ENCODE measurements at regions of chr11 and their contacts with region 1.

Region 1: GRCh38 chr11:121451986-121452608 is at the start of gene SORL1:
- DNase-seq: peak; percentile 66 to 76
- ATAC-seq: peak; percentile 87 to 94 (median 90)
- H3K4me3 ChIP-seq: peak within 1 kb of the TSS; percentile 50 to 89 (median 75)
- H3K27ac ChIP-seq: peak within 1 kb of the TSS in 3 of 10 donors; percentile 21 to 90 (median 32)
- H3K4me1 ChIP-seq: peaks cover 0 to 80% (median 5%) of the 10 kb centered on the region in 9 donors
- H3K27me3 ChIP-seq: peaks cover 0 to 26% (median 14%) of the 10 kb centered on the region in 7 donors
- CTCF ChIP-seq: peak in 8 of 9 donors; percentile 38 to 66 (median 44)
- total RNA-seq, gene SORL1: 4.7 to 15.1 (median 9.0) TPM

Region 2: DNA sequence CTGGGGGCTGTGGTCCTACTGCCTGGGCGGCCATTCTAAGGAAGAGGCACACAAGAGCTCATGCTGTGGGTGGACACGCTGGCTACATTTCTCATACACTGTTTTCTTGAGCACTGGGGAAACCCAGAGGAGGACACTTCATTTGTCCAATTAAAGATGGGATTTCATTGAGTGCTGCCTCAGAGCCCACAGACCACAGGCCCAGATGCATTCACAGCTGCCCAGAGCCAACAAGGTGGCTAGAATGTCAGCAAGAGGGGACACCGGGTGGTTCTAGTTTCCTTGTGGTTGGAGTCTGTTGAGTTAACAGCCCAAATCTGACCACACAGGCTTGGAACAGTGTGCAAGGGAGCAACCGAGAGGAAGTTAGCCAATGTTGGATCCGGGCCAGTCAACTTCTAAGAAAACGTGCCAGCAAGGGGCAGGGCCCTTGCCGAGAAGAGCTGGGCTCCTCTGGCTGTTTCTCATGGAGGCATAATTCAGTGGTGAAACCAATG is 35.0 kb before region 1 on chr11:
- intact Hi-C with region 1: no loop called
- DNase-seq: peak; percentile 69 to 85
- ATAC-seq: peak; percentile 79 to 91 (median 90)
- H3K4me3 ChIP-seq: no peak overlapping the region
- H3K27ac ChIP-seq: peak overlapping the region in 8 of 10 donors; percentile 14 to 92 (median 44)
- H3K4me1 ChIP-seq: peaks cover 6 to 73% (median 29%) of the 10 kb centered on the region in 9 donors
- H3K27me3 ChIP-seq: no peaks in the 10 kb centered on the region
- CTCF ChIP-seq: no peak

Region 3: DNA sequence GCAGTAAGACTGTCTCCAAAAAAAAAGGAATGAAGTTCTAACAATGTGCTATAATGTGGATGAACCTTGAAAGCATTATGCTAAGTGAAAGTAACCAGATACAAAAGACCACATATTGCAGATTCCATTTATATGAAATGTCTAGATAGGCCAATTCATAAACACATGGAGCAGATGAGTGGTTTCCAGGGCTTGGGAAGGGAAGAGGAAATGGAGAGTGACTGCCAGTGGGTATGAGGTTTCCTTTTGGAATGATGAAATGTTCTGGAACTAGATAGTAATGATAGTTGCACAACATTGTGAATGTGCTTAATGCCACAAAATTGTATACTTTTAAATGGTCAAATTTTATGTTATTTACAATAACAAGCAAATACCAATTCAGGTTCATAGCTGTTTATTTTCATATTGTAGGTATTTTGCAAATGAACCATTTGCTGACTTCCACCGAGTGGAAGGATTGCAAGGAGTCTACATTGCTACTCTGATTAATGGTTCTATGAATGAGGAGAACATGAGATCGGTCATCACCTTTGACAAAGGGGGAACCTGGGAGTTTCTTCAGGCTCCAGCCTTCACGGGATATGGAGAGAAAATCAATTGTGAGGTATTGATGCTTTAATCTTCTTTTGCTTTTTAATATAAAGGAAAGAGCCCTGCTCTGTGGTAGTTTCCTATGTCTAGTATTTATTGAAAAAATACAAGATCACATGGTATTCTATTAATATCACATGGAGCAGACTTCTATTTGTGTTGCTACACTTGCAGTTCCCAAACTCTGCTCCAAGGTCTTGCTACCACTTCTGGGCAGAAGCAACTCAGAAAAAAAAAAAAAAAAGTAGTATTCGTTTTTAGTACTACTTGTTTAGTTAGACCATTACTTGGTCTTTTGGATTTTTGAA is 68.4 kb after region 1 on chr11:
- intact Hi-C with region 1: loop called in 1 of 10 experiments (anchors 10 kb)
- DNase-seq: no peak
- ATAC-seq: peak in 3 of 8 donors; percentile 49 to 62 (median 51)
- H3K4me3 ChIP-seq: no peak overlapping the region
- H3K27ac ChIP-seq: no peak overlapping the region
- H3K4me1 ChIP-seq: peaks cover 0 to 29% (median 11%) of the 10 kb centered on the region in 9 donors
- H3K27me3 ChIP-seq: no peaks in the 10 kb centered on the region
- CTCF ChIP-seq: no peak

Region 4: GRCh38 chr11:121534131-121535093 is 82.3 kb after region 1 on chr11:
- intact Hi-C with region 1: loop called in 3 of 10 experiments (anchors 5 to 10 kb)
- DNase-seq: peak in 1 of 2 donors; percentile 15
- ATAC-seq: peak in 5 of 8 donors; percentile 59 to 69 (median 61)
- H3K4me3 ChIP-seq: no peak overlapping the region
- H3K27ac ChIP-seq: no peak overlapping the region
- H3K4me1 ChIP-seq: no peaks in the 10 kb centered on the region
- H3K27me3 ChIP-seq: peaks cover 0 to 6% (median 0%) of the 10 kb centered on the region in 7 donors
- CTCF ChIP-seq: peak in 7 of 9 donors; percentile 32 to 65 (median 49)

Region 5: GRCh38 chr11:121575250-121575962 is 123.3 kb after region 1 on chr11:
- intact Hi-C with region 1: loop called in 1 of 10 experiments (anchors 10 kb)
- DNase-seq: peak; percentile 48 to 52
- ATAC-seq: peak; percentile 82 to 97 (median 88)
- H3K4me3 ChIP-seq: no peak overlapping the region
- H3K27ac ChIP-seq: peak overlapping the region in 4 of 10 donors; percentile 9 to 62 (median 32)
- H3K4me1 ChIP-seq: peaks cover 0 to 47% (median 0%) of the 10 kb centered on the region in 9 donors
- H3K27me3 ChIP-seq: peaks cover 0 to 5% (median 0%) of the 10 kb centered on the region in 7 donors
- CTCF ChIP-seq: no peak

Region 6: GRCh38 chr11:121591405-121592033 is 139.4 kb after region 1 on chr11:
- intact Hi-C with region 1: loop called in 1 of 10 experiments (anchors 10 kb)
- DNase-seq: peak in 1 of 2 donors; percentile 76
- ATAC-seq: peak in 7 of 8 donors; percentile 74 to 85 (median 82)
- H3K4me3 ChIP-seq: no peak overlapping the region
- H3K27ac ChIP-seq: no peak overlapping the region
- H3K4me1 ChIP-seq: peaks cover 0 to 13% (median 0%) of the 10 kb centered on the region in 9 donors
- H3K27me3 ChIP-seq: no peaks in the 10 kb centered on the region
- CTCF ChIP-seq: peak; percentile 73 to 90 (median 85)

Region 7: DNA sequence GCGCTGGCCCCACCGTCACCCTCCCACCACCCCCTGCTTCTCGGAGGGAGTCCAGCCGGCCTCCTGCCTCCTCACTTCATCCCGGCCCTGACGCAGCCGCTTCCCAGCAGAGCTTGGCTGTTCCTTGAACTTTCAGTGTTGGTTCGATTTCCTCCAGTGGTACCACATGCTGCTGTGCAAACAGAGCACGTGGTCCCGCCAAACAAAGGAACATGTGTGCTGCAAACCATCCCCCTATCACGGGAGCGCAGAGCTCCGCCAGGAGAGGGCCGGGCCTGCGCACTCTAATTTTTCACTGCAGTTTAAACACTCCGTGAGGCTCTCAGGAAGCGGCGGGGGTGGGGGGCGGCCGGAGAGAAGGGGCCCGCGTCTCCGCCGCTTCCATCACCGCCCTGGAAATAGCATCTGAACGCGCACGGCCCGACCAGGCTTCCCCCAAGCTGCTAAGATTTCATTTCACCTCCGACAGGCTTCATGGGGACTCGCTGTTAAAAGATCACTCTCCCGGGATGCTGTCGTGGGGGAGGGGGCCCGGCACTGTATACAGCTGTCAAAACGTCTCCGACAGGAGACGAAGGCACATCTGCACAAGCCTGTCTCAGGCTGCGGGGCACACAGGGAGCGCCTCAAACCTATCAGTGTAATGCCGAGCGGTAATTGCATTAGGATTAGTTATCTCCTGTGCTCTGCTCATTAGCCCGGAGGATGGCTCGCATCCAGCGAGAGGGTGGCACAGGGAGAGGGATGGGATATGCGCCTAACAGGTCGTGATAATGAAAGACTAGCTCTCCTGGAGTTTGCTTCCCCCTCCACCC is 270.5 kb after region 1 on chr11:
- intact Hi-C with region 1: no loop called
- DNase-seq: peak; percentile 73 to 80
- ATAC-seq: peak; percentile 94 to 98 (median 97)
- H3K4me3 ChIP-seq: peak overlapping the region; percentile 16 to 61 (median 51)
- H3K27ac ChIP-seq: peak overlapping the region; percentile 30 to 90 (median 84)
- H3K4me1 ChIP-seq: peaks cover 0 to 22% (median 16%) of the 10 kb centered on the region in 9 donors
- H3K27me3 ChIP-seq: peaks cover 0 to 24% (median 0%) of the 10 kb centered on the region in 7 donors
- CTCF ChIP-seq: peak in 2 of 9 donors; percentile 30 to 33

Region 8: GRCh38 chr11:122146475-122146874 is 694.4 kb after region 1 on chr11:
- intact Hi-C with region 1: no loop called
- DNase-seq: no peak
- ATAC-seq: no peak
- H3K4me3 ChIP-seq: no peak overlapping the region
- H3K27ac ChIP-seq: no peak overlapping the region
- H3K4me1 ChIP-seq: no peaks in the 10 kb centered on the region
- H3K27me3 ChIP-seq: no peaks in the 10 kb centered on the region
- CTCF ChIP-seq: no peak

Measured in heart right ventricle (tissue), 16 donors.